Mucosa of descending colon (tissue), 3 donors: ENCODE measurements at regions of chr11 and their contacts with region 1.

Region 1: DNA sequence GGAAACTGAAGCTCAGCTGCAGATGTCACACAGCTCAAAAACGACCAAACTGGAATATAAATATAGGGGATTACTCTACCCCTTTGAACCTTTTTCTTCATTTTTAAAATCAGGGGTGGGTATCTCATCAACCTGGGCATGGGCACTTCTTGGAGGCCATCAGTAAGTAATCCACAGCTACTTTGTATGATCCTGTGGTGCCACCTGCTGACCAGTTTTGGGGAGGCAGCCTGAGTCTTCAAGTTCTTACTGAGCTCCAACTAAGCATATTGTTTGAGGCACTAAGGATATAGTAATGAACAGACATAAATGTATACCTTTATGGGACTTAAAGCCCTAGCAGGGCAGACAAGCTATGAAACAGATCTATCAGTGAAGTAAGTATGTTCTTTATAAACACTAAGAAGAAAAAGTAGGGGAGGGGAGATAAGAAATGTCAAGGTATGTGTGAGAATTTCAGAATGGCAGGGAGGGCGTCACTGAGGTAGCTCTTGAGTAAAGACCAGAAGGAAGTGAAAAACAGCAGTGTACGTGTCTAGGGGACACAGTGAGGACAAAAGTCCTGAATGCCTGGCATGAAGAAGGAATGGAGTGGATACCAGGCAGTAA is 18.4 kb downstream of the TUB start:
- DNase-seq: peak in 2 of 3 donors; percentile 83 to 95
- ATAC-seq: peak; percentile 69
- H3K4me3 ChIP-seq: no peak overlapping the region
- H3K4me1 ChIP-seq: no peaks in the 10 kb centered on the region
- CTCF ChIP-seq: peak; percentile 50

Region 2: DNA sequence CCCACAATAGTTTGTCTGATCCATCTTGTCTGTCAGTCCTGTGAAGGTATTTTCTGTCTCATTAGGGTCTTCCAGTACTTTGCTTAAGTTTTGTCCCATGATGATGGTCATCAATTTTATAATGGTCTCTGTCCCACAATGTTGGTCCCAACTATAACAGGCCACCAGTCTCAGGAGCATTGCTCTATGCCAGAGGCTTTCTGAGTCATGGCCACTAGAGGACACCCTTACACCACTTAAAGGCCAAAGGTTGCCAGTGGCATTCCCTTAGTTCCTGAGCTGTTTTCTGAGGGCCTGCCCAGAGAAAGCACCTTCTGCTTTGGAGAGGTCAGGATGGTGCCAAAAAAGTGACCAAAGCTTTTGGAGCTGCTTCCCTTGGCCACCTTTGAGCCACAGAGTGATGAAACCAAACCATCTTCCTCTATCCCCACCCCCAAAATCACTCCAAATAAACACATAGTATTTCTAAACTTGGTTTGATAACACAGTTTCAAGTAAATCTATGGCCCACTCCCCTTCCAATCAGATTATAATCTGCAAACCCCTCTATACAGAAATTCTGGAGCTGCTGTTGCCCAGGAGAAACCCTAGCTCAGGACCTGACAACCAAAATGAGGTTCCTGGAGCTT is 92.9 kb before region 1 on chr11:
- intact Hi-C with region 1: loop called in 1 of 2 experiments (anchors 5 kb)
- DNase-seq: peak in 1 of 3 donors; percentile 79
- ATAC-seq: peak; percentile 88
- H3K4me3 ChIP-seq: no peak overlapping the region
- H3K4me1 ChIP-seq: no peaks in the 10 kb centered on the region
- CTCF ChIP-seq: peak; percentile 55

Region 3: GRCh38 chr11:8056810-8057463 is 42.5 kb before region 1 on chr11:
- intact Hi-C with region 1: no loop called
- DNase-seq: peak in 1 of 3 donors; percentile 35
- ATAC-seq: peak; percentile 42
- H3K4me3 ChIP-seq: no peak overlapping the region
- H3K4me1 ChIP-seq: peaks cover 3% of the 10 kb centered on the region
- CTCF ChIP-seq: no peak

Region 4: GRCh38 chr11:8338138-8338537 is 238.7 kb after region 1 on chr11:
- intact Hi-C with region 1: no loop called
- DNase-seq: peak in 2 of 3 donors; percentile 70 to 71
- ATAC-seq: peak; percentile 79
- H3K4me3 ChIP-seq: no peak overlapping the region
- H3K4me1 ChIP-seq: no peaks in the 10 kb centered on the region
- CTCF ChIP-seq: peak; percentile 57